ENCODE measurements at regions of chr1 and their contacts with region 1.

Region 1: DNA sequence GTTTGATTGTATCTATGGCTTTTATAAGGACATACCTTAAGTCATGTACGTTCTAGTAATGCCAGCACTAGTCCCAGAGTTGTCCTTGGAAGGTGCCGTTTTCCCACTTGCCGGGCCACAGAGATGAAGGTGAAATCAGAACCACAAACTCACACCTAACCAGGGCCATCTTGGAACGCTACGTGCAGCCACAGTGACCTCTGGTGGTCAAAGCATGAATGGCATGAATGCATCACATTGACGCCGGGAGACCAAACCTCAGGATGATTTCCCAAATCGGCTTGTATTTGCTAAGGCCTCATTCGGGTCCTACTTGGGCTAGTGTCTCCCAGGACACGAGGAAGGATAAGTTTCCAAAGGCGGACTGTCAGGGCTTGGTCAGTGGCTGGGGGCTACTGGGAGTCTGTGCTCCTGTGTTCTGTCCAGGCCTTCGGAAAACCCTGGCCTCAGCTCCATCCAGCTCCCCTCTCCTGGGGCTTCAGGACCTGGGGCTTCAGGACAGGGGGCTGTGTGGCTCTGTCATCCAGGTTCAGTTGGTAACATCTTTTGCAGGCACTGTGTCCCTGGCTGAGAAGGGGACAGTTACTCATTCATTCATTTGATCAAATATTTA is 260.5 kb downstream of the PRDM2 start:
- H3K4me3 Mint-ChIP-seq: no peak overlapping the region
- H3K27ac Mint-ChIP-seq: no peak overlapping the region
- H3K4me1 Mint-ChIP-seq: no peaks in the 10 kb centered on the region
- H3K27me3 Mint-ChIP-seq: peaks cover 8% of the 10 kb centered on the region

Region 2: DNA sequence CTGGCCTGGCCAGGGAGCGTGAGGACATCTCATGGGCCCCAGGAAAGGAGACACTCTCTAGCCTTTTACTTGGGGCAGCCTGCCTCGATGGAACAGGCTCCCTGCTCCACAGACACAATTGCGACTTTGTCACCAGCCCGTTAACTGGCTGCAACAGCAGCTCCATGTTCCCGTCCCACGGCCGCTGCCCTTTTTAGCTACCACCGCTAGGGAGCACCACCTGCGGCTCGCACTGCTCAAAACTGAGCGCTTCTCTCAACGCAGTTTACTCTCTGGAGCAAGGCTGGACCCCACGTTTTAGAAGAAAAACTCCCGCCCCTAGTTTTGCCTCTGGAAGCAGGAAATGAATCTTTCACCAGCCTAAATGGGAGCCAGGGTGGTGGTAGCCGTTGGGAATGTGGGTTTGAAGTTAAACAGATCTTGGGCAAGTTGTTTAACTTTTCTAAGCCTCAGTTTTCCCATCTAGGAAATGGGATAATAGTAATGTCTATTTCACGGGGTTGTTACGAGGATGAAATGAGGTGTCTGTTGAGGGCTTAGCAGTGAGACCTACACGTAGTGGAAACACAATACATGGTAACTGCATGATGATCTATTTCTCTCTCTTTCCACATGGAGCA is 443.2 kb before region 1 on chr1:
- intact Hi-C with region 1: loop called (anchors 5 kb)
- H3K4me3 Mint-ChIP-seq: no peak overlapping the region
- H3K27ac Mint-ChIP-seq: no peak overlapping the region
- H3K4me1 Mint-ChIP-seq: no peaks in the 10 kb centered on the region
- H3K27me3 Mint-ChIP-seq: peaks cover 54% of the 10 kb centered on the region

Region 3: DNA sequence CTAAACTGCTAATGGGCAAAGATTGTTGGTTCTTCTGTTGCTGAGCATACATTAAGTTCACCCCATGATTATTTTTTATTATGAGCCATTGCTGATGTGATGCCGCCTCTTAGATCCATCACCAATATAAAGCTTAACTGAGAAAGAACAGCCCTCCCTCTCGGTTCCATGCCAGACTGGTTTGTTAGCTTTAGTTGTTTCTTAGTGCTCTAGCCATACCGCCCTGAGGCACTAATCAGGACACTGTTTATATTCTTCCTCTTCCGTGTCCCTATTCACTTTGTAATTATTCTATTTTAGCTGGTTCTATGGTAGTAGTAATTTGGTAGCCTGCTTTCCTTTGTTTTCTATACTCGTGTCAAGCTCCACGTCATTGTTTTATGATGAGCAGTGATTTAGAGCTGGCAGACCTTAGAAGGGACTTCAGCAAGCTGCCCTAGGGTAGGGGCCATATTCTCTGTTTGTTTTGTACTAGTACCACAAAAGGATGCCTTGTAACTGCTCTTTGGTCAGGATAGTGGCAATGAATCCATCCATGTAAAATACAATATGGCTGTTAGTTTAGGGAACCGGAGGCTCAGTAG is 404.2 kb before region 1 on chr1:
- intact Hi-C with region 1: no loop called
- H3K4me3 Mint-ChIP-seq: no peak overlapping the region
- H3K27ac Mint-ChIP-seq: no peak overlapping the region
- H3K4me1 Mint-ChIP-seq: no peaks in the 10 kb centered on the region
- H3K27me3 Mint-ChIP-seq: peaks cover 5% of the 10 kb centered on the region

Region 4: GRCh38 chr1:13619909-13620308 is 340.6 kb before region 1 on chr1:
- intact Hi-C with region 1: no loop called
- H3K4me3 Mint-ChIP-seq: no peak overlapping the region
- H3K27ac Mint-ChIP-seq: no peak overlapping the region
- H3K4me1 Mint-ChIP-seq: peaks cover 15% of the 10 kb centered on the region
- H3K27me3 Mint-ChIP-seq: peaks cover 18% of the 10 kb centered on the region

Region 5: DNA sequence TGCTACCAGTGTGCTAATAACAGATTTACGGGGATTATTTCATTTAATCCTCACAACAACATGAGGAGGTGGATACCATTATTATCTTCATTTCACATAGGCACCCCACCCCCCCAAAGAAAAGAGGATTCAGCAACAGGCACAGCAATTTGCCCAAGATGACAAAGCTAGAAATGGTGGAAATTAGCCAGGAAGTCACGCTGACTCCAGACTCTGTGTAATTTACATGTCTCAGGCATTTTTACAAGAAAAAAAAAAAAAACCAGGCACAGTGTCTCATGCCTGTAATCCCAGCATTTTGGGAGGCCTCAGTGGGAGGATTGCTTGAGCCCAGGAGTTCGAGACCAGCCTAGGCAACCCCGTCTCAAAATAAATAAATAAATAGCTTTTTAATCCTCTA is 298.0 kb before region 1 on chr1:
- intact Hi-C with region 1: loop called (anchors 1 kb)
- H3K4me3 Mint-ChIP-seq: no peak overlapping the region
- H3K27ac Mint-ChIP-seq: peak overlapping the region; percentile 60
- H3K4me1 Mint-ChIP-seq: peaks cover 31% of the 10 kb centered on the region
- H3K27me3 Mint-ChIP-seq: no peaks in the 10 kb centered on the region

Region 6: DNA sequence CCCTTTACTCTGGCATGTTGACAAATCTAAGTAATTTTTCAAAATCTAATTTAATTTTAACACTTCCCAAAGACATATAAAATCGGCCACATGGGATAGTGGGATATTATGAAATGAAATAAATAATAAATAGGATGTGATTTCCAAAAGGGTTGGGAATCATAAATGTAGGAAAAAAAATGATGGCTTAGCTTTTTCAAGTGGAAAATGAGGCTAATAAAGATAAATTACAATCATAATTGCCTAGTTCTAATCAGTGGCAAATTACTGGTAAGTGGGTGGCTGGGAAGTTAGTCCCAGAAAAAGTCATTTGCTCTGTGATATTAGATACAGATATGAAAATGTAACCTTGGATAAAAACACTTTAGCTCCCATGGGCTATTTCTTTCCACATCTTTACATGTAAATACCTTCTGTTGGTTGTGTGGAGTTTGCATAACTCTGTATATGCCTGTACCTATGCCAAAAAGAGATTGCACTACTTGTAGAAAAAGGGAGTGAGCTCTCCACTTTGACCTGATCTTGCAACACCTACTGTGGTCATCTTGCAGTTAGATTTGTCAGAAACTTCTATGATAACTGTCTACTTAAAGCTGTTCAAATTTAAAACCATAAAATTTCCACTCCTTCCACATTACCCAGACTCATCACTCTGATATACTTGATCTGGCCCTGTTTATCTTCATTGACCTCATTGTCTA is 353.4 kb after region 1 on chr1:
- intact Hi-C with region 1: no loop called
- H3K4me3 Mint-ChIP-seq: no peak overlapping the region
- H3K27ac Mint-ChIP-seq: no peak overlapping the region
- H3K4me1 Mint-ChIP-seq: no peaks in the 10 kb centered on the region
- H3K27me3 Mint-ChIP-seq: peaks cover 1% of the 10 kb centered on the region

Measured in dendritic cell treated with granulocyte-macrophage colony-stimulating factor and Interleukin-4, amounts not matched to agents 40 ng/mL and 50 ng/mL, for 4 days (primary cell).